Naive thymus-derived CD4-positive, alpha-beta T cell (primary cell): ENCODE measurements at regions of chr1 and their contacts with region 1.

Region 1: GRCh38 chr1:111227851-111228747 is 586 bp downstream of the CHI3L2 start:
- DNase-seq: no peak
- ATAC-seq: no peak
- H3K4me3 ChIP-seq: no peak overlapping the region
- H3K4me3 Mint-ChIP-seq: peak overlapping the region; percentile 57 to 88 (median 75)
- H3K27ac ChIP-seq: peak overlapping the region; percentile 71
- H3K27ac Mint-ChIP-seq: peak overlapping the region; percentile 74 to 99 (median 93)
- H3K4me1 ChIP-seq: peaks cover 58 to 79% of the 10 kb centered on the region in 2 donors
- H3K4me1 Mint-ChIP-seq: peaks cover 50 to 96% (median 92%) of the 10 kb centered on the region in 7 donors
- H3K27me3 ChIP-seq: no peaks in the 10 kb centered on the region
- H3K27me3 Mint-ChIP-seq: no peaks in the 10 kb centered on the region

Region 2: GRCh38 chr1:110696818-110697217 is 531.3 kb before region 1 on chr1:
- CTCF ChIA-PET with region 1: no interaction called
- POLR2A ChIA-PET with region 1: no interaction called
- intact Hi-C with region 1: no loop called
- DNase-seq: no peak
- ATAC-seq: no peak
- H3K4me3 ChIP-seq: no peak overlapping the region
- H3K4me3 Mint-ChIP-seq: no peak overlapping the region
- H3K27ac ChIP-seq: no peak overlapping the region
- H3K27ac Mint-ChIP-seq: no peak overlapping the region
- H3K4me1 ChIP-seq: no peaks in the 10 kb centered on the region
- H3K4me1 Mint-ChIP-seq: peaks cover 0 to 7% (median 0%) of the 10 kb centered on the region in 7 donors
- H3K27me3 ChIP-seq: no peaks in the 10 kb centered on the region
- H3K27me3 Mint-ChIP-seq: peaks cover 0 to 10% (median 4%) of the 10 kb centered on the region in 5 donors

Region 3: DNA sequence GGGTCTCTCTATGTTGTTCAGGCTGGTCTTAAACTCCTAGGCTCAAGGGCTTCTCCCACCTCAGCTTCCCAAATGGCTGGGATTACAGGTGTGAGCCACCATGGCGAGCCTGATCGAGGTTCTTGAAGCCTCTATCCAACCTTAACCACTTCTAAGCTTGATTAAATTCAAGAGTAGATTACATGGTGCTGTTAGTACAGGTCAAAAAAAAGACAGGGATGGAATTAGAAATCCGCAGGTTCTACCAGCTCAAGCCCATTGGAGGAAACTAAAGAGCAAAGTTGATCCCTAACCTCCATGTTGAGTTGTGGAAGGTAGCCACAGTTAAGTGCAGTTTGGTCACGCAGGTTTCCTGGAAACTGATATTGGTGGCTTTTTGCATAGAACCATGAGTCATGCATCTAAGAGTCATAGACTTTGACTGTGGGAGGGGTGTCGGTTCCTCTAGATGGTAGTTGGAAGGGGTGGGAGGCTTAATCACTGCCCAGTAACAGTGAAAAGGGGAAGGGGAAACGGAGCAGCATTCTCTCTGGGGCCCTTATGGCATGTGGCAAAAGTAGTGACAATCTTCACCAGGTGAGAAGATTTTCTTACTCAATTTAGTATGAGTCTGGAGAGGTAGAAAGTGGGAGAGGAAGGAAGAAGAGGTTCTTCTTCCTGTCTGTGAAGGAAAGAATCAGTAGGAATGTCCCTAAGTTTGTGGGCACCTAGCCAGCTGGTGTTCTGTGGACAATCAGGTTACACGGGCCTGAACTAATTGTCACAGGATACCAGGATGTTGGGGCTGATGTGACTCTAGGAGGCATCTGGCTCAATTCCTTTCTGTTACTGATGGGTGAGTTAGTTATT is 348.1 kb before region 1 on chr1:
- CTCF ChIA-PET with region 1: no interaction called
- POLR2A ChIA-PET with region 1: no interaction called
- intact Hi-C with region 1: no loop called
- DNase-seq: peak in 2 of 9 donors; percentile 63 to 65
- ATAC-seq: peak; percentile 73
- H3K4me3 ChIP-seq: peak overlapping the region; percentile 41
- H3K4me3 Mint-ChIP-seq: peak overlapping the region; percentile 78 to 96 (median 88)
- H3K27ac ChIP-seq: peak overlapping the region; percentile 44
- H3K27ac Mint-ChIP-seq: peak overlapping the region; percentile 89 to 99 (median 93)
- H3K4me1 ChIP-seq: peaks cover 69 to 77% of the 10 kb centered on the region in 2 donors
- H3K4me1 Mint-ChIP-seq: peaks cover 71 to 96% (median 85%) of the 10 kb centered on the region in 7 donors
- H3K27me3 ChIP-seq: no peaks in the 10 kb centered on the region
- H3K27me3 Mint-ChIP-seq: no peaks in the 10 kb centered on the region

Region 4: GRCh38 chr1:111214074-111214801 is 13.9 kb before region 1 on chr1:
- CTCF ChIA-PET with region 1: interaction called, 10 read pairs
- POLR2A ChIA-PET with region 1: interaction called, 99 read pairs
- intact Hi-C with region 1: loop called in 1 of 2 experiments (anchors 1 kb)
- DNase-seq: no peak
- ATAC-seq: no peak
- H3K4me3 ChIP-seq: peak overlapping the region; percentile 12
- H3K4me3 Mint-ChIP-seq: peak overlapping the region; percentile 60 to 88 (median 81)
- H3K27ac ChIP-seq: peak overlapping the region; percentile 75
- H3K27ac Mint-ChIP-seq: peak overlapping the region; percentile 94 to 100 (median 97)
- H3K4me1 ChIP-seq: peaks cover 65 to 67% of the 10 kb centered on the region in 2 donors
- H3K4me1 Mint-ChIP-seq: peaks cover 66 to 98% (median 93%) of the 10 kb centered on the region in 7 donors
- H3K27me3 ChIP-seq: no peaks in the 10 kb centered on the region
- H3K27me3 Mint-ChIP-seq: peaks cover 0 to 2% (median 0%) of the 10 kb centered on the region in 5 donors

Region 5: DNA sequence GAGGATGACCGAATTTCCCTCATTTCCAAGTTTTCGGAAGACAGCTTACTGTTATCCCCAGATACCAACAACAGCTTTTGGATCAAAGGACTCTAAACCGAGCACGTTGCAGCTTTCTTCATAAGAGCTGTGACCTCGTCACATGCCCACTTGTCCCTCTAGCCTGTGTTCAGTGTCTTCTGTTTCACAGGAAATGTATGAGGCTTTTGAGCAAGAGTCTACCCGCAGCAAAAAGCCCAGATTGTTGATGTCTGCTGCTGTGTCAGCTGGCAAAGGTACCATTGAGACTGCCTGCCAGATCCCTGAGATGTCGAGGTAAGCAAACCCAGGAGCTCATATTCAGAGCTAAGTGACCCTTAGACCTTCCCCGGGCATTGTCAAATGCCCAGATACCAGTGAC is 23.5 kb after region 1 on chr1:
- CTCF ChIA-PET with region 1: interaction called, 4 read pairs
- POLR2A ChIA-PET with region 1: interaction called, 11 read pairs
- intact Hi-C with region 1: loop called in 1 of 2 experiments (anchors 2 kb)
- DNase-seq: peak in 7 of 9 donors; percentile 25 to 54 (median 37)
- ATAC-seq: peak; percentile 82
- H3K4me3 ChIP-seq: no peak overlapping the region
- H3K4me3 Mint-ChIP-seq: peak overlapping the region in 6 of 10 donors; percentile 7 to 56 (median 24)
- H3K27ac ChIP-seq: peak overlapping the region; percentile 6
- H3K27ac Mint-ChIP-seq: peak overlapping the region; percentile 57 to 95 (median 67)
- H3K4me1 ChIP-seq: peaks cover 4 to 10% of the 10 kb centered on the region in 2 donors
- H3K4me1 Mint-ChIP-seq: peaks cover 9 to 45% (median 39%) of the 10 kb centered on the region in 7 donors
- H3K27me3 ChIP-seq: no peaks in the 10 kb centered on the region
- H3K27me3 Mint-ChIP-seq: peaks cover 0 to 8% (median 0%) of the 10 kb centered on the region in 5 donors

Region 6: DNA sequence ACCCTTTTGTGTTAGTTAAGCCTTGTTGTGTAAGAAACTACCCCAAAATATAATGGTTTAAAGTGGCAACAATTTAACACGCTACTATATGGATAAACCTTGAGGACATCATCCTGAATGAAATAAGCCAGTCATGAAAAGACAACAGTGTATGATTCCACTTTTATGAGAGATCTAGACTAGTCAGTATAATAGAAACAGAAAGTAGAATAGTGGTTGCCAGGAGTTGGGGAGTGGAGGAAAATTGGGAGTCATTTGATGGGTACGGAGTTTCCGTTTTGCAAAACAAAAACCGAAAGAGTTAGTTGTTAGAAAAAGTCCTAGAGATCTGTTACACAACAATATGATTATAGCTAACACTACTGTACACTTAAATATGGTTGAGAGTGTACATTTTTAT is 46.6 kb after region 1 on chr1:
- CTCF ChIA-PET with region 1: interaction called, 3 read pairs
- POLR2A ChIA-PET with region 1: interaction called, 3 read pairs
- intact Hi-C with region 1: loop called (anchors 2 to 5 kb)
- DNase-seq: no peak
- ATAC-seq: no peak
- H3K4me3 ChIP-seq: no peak overlapping the region
- H3K4me3 Mint-ChIP-seq: peak overlapping the region in 1 of 10 donors; percentile 24
- H3K27ac ChIP-seq: no peak overlapping the region
- H3K27ac Mint-ChIP-seq: peak overlapping the region in 1 of 9 donors; percentile 11
- H3K4me1 ChIP-seq: no peaks in the 10 kb centered on the region
- H3K4me1 Mint-ChIP-seq: peaks cover 8 to 29% (median 13%) of the 10 kb centered on the region in 7 donors
- H3K27me3 ChIP-seq: peaks cover 5 to 6% of the 10 kb centered on the region in 2 donors
- H3K27me3 Mint-ChIP-seq: peaks cover 10 to 35% (median 29%) of the 10 kb centered on the region in 5 donors

Region 7: DNA sequence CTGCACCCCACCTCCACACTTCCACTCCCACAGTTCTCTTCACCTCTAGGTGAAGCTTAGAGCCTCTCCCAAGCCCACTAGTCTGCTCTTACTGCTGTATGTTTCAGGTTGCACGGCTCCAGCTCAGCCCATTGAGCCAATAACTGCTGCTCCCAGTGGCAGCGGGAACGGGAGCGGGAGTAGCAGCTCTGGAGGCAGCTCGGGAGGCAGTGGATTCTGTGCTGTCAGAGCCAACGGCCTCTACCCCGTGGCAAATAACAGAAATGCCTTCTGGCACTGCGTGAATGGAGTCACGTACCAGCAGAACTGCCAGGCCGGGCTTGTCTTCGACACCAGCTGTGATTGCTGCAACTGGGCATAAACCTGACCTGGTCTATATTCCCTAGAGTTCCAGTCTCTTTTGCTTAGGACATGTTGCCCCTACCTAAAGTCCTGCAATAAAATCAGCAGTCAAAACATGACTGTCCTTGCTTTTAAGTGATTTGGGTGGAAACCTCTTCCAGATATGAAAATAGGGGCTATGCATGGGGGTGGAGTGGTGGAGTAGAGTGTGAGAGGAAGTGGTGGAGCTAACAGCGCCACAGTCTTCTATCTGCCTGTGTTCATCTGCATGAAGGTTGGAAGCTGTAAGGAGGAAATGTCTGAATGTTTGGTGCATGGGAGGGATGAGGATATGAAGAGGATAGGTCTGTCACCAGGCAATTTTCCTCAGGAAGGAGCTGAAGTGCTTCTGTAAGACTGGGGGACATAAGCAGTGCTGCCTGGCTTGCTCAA is 92.2 kb after region 1 on chr1:
- CTCF ChIA-PET with region 1: interaction called, 10 read pairs
- POLR2A ChIA-PET with region 1: interaction called, 4 read pairs
- intact Hi-C with region 1: no loop called
- DNase-seq: peak in 5 of 9 donors; percentile 3 to 41 (median 25)
- ATAC-seq: peak; percentile 70
- H3K4me3 ChIP-seq: no peak overlapping the region
- H3K4me3 Mint-ChIP-seq: peak overlapping the region in 8 of 10 donors; percentile 9 to 66 (median 41)
- H3K27ac ChIP-seq: no peak overlapping the region
- H3K27ac Mint-ChIP-seq: peak overlapping the region in 7 of 9 donors; percentile 2 to 88 (median 52)
- H3K4me1 ChIP-seq: peaks cover 0 to 14% of the 10 kb centered on the region in 2 donors
- H3K4me1 Mint-ChIP-seq: peaks cover 7 to 33% (median 28%) of the 10 kb centered on the region in 7 donors
- H3K27me3 ChIP-seq: no peaks in the 10 kb centered on the region
- H3K27me3 Mint-ChIP-seq: peaks cover 0 to 4% (median 0%) of the 10 kb centered on the region in 5 donors